ENCODE measurements at regions of chr3 and their contacts with region 1.

Region 1: DNA sequence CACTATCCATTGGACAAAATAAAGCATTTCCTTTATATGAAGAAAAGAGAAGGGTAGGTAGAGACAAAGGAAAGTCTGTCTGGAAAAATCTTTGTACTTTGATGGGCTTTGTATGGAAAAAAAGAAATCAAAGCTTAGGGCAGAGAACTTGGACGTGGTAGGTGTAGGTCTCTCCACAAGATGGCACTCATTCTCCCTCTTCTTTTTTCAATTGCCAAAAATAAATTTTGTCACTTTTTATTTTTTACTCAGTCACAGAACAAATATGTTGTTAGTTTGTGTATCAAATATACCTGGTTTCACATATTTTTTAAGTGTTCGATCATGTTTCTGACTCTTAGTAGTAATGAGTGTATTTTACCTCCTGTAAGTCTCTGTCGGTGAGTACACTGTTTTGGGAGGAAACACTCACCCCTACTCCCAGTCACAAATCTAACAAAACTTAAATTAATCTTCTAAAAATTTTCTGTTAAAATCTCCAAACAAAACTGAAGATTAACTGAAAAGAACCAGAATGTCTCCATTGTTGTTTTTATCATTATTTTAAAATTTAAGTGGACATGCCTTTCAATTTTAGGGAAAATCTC is 415.8 kb upstream of the GOLIM4 start:
- DNase-seq: no peak
- H3K4me3 Mint-ChIP-seq: no peak overlapping the region
- H3K27ac Mint-ChIP-seq: no peak overlapping the region
- H3K4me1 Mint-ChIP-seq: no peaks in the 10 kb centered on the region
- H3K27me3 Mint-ChIP-seq: no peaks in the 10 kb centered on the region

Region 2: GRCh38 chr3:167066977-167067786 is 1444.3 kb before region 1 on chr3:
- CTCF ChIA-PET with region 1: no interaction called
- intact Hi-C with region 1: no loop called
- DNase-seq: no peak
- H3K4me3 Mint-ChIP-seq: no peak overlapping the region
- H3K27ac Mint-ChIP-seq: no peak overlapping the region
- H3K4me1 Mint-ChIP-seq: no peaks in the 10 kb centered on the region
- H3K27me3 Mint-ChIP-seq: no peaks in the 10 kb centered on the region

Region 3: DNA sequence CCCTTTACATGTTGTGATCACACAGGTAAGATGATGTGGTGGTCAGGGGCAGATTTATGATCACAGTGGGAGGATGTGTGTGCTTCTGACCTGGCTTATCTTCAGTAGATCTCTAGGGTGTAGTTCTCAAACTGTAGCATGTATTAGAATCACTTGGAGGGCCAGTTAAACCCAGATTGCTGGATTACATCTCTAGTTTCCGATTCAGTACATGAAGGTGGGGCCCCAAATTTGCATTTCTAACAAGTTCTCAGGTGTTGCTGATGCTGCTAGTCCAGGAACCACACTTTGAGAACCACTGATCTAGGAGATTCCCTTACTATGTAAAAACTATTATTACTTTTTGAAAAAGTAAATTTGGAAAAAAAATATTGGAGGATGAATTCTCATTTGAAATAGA is 216.5 kb before region 1 on chr3:
- CTCF ChIA-PET with region 1: no interaction called
- intact Hi-C with region 1: no loop called
- DNase-seq: no peak
- H3K4me3 Mint-ChIP-seq: no peak overlapping the region
- H3K27ac Mint-ChIP-seq: no peak overlapping the region
- H3K4me1 Mint-ChIP-seq: no peaks in the 10 kb centered on the region
- H3K27me3 Mint-ChIP-seq: no peaks in the 10 kb centered on the region

Region 4: GRCh38 chr3:168847291-168847883 is 335.9 kb after region 1 on chr3:
- CTCF ChIA-PET with region 1: no interaction called
- intact Hi-C with region 1: loop called (anchors 1 kb)
- DNase-seq: no peak
- H3K4me3 Mint-ChIP-seq: no peak overlapping the region
- H3K27ac Mint-ChIP-seq: no peak overlapping the region
- H3K4me1 Mint-ChIP-seq: no peaks in the 10 kb centered on the region
- H3K27me3 Mint-ChIP-seq: peaks cover 3% of the 10 kb centered on the region

Measured in activated naive CD4-positive, alpha-beta T cell treated with anti-CD3 and anti-CD28 coated beads for 36 hours (primary cell).